ENCODE measurements at regions of chr2 and their contacts with region 1.

Region 1: GRCh38 chr2:42169100-42169873 is at the start of gene EML4:
- DNase-seq: peak; percentile 87
- H3K4me3 Mint-ChIP-seq: no peak within 1 kb of the TSS
- H3K27ac Mint-ChIP-seq: no peak within 1 kb of the TSS
- H3K4me1 Mint-ChIP-seq: peaks cover 17% of the 10 kb centered on the region
- H3K27me3 Mint-ChIP-seq: peaks cover 10% of the 10 kb centered on the region
- total RNA-seq, gene EML4: 43.0 and 45.2 TPM in 2 replicates

Region 2: GRCh38 chr2:41379496-41380221 is 789.6 kb before region 1 on chr2:
- intact Hi-C with region 1: no loop called
- DNase-seq: no peak
- H3K4me3 Mint-ChIP-seq: no peak overlapping the region
- H3K27ac Mint-ChIP-seq: no peak overlapping the region
- H3K4me1 Mint-ChIP-seq: no peaks in the 10 kb centered on the region
- H3K27me3 Mint-ChIP-seq: no peaks in the 10 kb centered on the region

Region 3: GRCh38 chr2:42180300-42180699 is 11.0 kb after region 1 on chr2:
- intact Hi-C with region 1: loop called (anchors 1 kb)
- DNase-seq: no peak
- H3K4me3 Mint-ChIP-seq: no peak overlapping the region
- H3K27ac Mint-ChIP-seq: no peak overlapping the region
- H3K4me1 Mint-ChIP-seq: peaks cover 40% of the 10 kb centered on the region
- H3K27me3 Mint-ChIP-seq: no peaks in the 10 kb centered on the region

Region 4: DNA sequence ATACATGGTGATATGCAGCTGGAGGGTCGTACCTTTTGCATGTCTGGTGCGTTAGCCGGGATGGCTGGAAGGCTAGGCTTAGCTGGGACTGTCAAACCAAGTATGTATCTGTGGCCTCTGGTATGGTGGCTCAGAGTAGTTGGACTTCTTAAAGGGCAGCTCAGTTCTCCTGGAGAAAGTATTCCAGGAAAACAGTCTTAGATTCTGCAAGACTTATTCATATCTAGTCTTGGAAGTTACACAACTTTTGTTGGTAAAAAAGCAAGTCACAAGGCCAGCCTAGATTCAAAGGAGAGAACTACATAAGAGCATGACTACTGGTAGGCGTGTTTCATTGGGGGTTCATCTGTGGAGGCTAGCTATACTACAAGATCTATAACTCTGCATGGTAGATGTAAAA is 45.4 kb after region 1 on chr2:
- intact Hi-C with region 1: no loop called
- DNase-seq: no peak
- H3K4me3 Mint-ChIP-seq: no peak overlapping the region
- H3K27ac Mint-ChIP-seq: no peak overlapping the region
- H3K4me1 Mint-ChIP-seq: peaks cover 19% of the 10 kb centered on the region
- H3K27me3 Mint-ChIP-seq: no peaks in the 10 kb centered on the region

Measured in activated T-helper 2 cell treated with anti-CD3 and anti-CD28 coated beads, Interferon-gamma antibody, Interleukin-2, Interleukin-4, amounts not matched to agents 10 μg/mL and 5 μg/mL and 100 μg/mL, durations not matched to agents 14 hours and 24 hours and 36 hours (primary cell).